ENCODE measurements at regions of chr20 and their contacts with region 1.

Region 1: GRCh38 chr20:10673988-10674711 is at the start of gene JAG1:
- DNase-seq: peak; percentile 78
- ATAC-seq: peak; percentile 74
- H3K4me3 Mint-ChIP-seq: peak within 1 kb of the TSS; percentile 75
- H3K27ac Mint-ChIP-seq: peak within 1 kb of the TSS; percentile 59
- H3K4me1 Mint-ChIP-seq: peaks cover 21% of the 10 kb centered on the region
- H3K27me3 Mint-ChIP-seq: peaks cover 61% of the 10 kb centered on the region
- CTCF ChIP-seq: no peak
- total RNA-seq, gene JAG1: 0.41 to 0.58 TPM

Region 2: GRCh38 chr20:10131612-10132345 is 542.4 kb before region 1 on chr20:
- CTCF ChIA-PET with region 1: no interaction called
- POLR2A ChIA-PET with region 1: no interaction called
- intact Hi-C with region 1: no loop called
- DNase-seq: no peak
- ATAC-seq: no peak
- H3K4me3 Mint-ChIP-seq: no peak overlapping the region
- H3K27ac Mint-ChIP-seq: no peak overlapping the region
- H3K4me1 Mint-ChIP-seq: no peaks in the 10 kb centered on the region
- H3K27me3 Mint-ChIP-seq: peaks cover 5% of the 10 kb centered on the region
- CTCF ChIP-seq: no peak

Region 3: GRCh38 chr20:10434467-10434831 is 239.7 kb before region 1 on chr20:
- CTCF ChIA-PET with region 1: no interaction called
- POLR2A ChIA-PET with region 1: no interaction called
- intact Hi-C with region 1: loop called (anchors 5 kb)
- DNase-seq: peak; percentile 79
- ATAC-seq: peak; percentile 53
- H3K4me3 Mint-ChIP-seq: peak overlapping the region; percentile 81
- H3K27ac Mint-ChIP-seq: peak overlapping the region; percentile 94
- H3K4me1 Mint-ChIP-seq: peaks cover 50% of the 10 kb centered on the region
- H3K27me3 Mint-ChIP-seq: no peaks in the 10 kb centered on the region
- CTCF ChIP-seq: no peak

Region 4: GRCh38 chr20:10553326-10553984 is 120.7 kb before region 1 on chr20:
- CTCF ChIA-PET with region 1: interaction called, 3 read pairs
- POLR2A ChIA-PET with region 1: no interaction called
- intact Hi-C with region 1: loop called (anchors 5 kb)
- DNase-seq: peak; percentile 74
- ATAC-seq: peak; percentile 54
- H3K4me3 Mint-ChIP-seq: no peak overlapping the region
- H3K27ac Mint-ChIP-seq: no peak overlapping the region
- H3K4me1 Mint-ChIP-seq: peaks cover 37% of the 10 kb centered on the region
- H3K27me3 Mint-ChIP-seq: no peaks in the 10 kb centered on the region
- CTCF ChIP-seq: peak; percentile 72

Region 5: GRCh38 chr20:10647465-10647864 is 26.7 kb before region 1 on chr20:
- CTCF ChIA-PET with region 1: no interaction called
- POLR2A ChIA-PET with region 1: no interaction called
- intact Hi-C with region 1: no loop called
- DNase-seq: peak; percentile 24
- ATAC-seq: no peak
- H3K4me3 Mint-ChIP-seq: no peak overlapping the region
- H3K27ac Mint-ChIP-seq: no peak overlapping the region
- H3K4me1 Mint-ChIP-seq: no peaks in the 10 kb centered on the region
- H3K27me3 Mint-ChIP-seq: peaks cover 3% of the 10 kb centered on the region
- CTCF ChIP-seq: no peak